Activated naive CD8-positive, alpha-beta T cell treated with anti-CD3 and anti-CD28 coated beads, Interleukin-2, amount 10 ng/mL, durations not matched to agents 7 days and 5 days (primary cell): ENCODE measurements at regions of chr15 and their contacts with region 1.

Region 1: GRCh38 chr15:63146669-63147068 is 10.6 kb downstream of the RPS27L start:
- DNase-seq: no peak
- ATAC-seq: no peak
- H3K4me3 Mint-ChIP-seq: no peak overlapping the region
- H3K27ac Mint-ChIP-seq: no peak overlapping the region
- H3K4me1 Mint-ChIP-seq: peaks cover 10% of the 10 kb centered on the region
- H3K27me3 Mint-ChIP-seq: no peaks in the 10 kb centered on the region

Region 2: GRCh38 chr15:63157118-63157843 is 10.6 kb after region 1 on chr15 and contains the start of gene RPS27L:
- POLR2A ChIA-PET with region 1: interaction called, 10 read pairs
- DNase-seq: peak; percentile 87
- ATAC-seq: peak; percentile 97
- H3K4me3 Mint-ChIP-seq: peak within 1 kb of the TSS; percentile 98
- H3K27ac Mint-ChIP-seq: peak within 1 kb of the TSS; percentile 98
- H3K4me1 Mint-ChIP-seq: peaks cover 9% of the 10 kb centered on the region
- H3K27me3 Mint-ChIP-seq: no peaks in the 10 kb centered on the region
- total RNA-seq, gene RPS27L: 177 to 179 TPM

Region 3: DNA sequence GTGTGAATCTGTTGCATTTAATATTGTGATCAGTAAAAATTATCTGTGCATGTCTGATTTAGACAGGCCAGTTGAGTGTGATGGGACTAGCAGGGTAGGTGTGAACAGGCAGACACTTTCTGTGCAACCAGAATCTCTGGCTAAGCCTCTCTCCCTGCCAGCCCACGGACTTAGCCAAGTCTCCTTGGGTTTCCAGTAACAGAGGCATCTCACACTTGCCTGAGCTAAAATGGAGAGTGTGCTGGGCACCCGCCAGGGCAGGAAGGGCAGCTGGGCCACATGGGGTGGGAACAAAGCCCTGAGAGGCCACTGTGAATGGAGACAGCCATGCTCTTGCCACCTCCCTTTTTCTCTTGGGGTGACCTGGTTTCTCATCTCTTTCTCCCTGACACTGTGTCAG is 23.1 kb after region 1 on chr15:
- POLR2A ChIA-PET with region 1: no interaction called
- DNase-seq: no peak
- ATAC-seq: no peak
- H3K4me3 Mint-ChIP-seq: no peak overlapping the region
- H3K27ac Mint-ChIP-seq: no peak overlapping the region
- H3K4me1 Mint-ChIP-seq: peaks cover 4% of the 10 kb centered on the region
- H3K27me3 Mint-ChIP-seq: no peaks in the 10 kb centered on the region

Region 4: GRCh38 chr15:63232405-63232804 is 85.7 kb after region 1 on chr15:
- POLR2A ChIA-PET with region 1: no interaction called
- DNase-seq: no peak
- ATAC-seq: peak; percentile 60
- H3K4me3 Mint-ChIP-seq: peak overlapping the region; percentile 68
- H3K27ac Mint-ChIP-seq: peak overlapping the region; percentile 78
- H3K4me1 Mint-ChIP-seq: peaks cover 52% of the 10 kb centered on the region
- H3K27me3 Mint-ChIP-seq: no peaks in the 10 kb centered on the region